WTC11 (cell line): ENCODE measurements at regions of chr1 and their contacts with region 1.

Region 1: DNA sequence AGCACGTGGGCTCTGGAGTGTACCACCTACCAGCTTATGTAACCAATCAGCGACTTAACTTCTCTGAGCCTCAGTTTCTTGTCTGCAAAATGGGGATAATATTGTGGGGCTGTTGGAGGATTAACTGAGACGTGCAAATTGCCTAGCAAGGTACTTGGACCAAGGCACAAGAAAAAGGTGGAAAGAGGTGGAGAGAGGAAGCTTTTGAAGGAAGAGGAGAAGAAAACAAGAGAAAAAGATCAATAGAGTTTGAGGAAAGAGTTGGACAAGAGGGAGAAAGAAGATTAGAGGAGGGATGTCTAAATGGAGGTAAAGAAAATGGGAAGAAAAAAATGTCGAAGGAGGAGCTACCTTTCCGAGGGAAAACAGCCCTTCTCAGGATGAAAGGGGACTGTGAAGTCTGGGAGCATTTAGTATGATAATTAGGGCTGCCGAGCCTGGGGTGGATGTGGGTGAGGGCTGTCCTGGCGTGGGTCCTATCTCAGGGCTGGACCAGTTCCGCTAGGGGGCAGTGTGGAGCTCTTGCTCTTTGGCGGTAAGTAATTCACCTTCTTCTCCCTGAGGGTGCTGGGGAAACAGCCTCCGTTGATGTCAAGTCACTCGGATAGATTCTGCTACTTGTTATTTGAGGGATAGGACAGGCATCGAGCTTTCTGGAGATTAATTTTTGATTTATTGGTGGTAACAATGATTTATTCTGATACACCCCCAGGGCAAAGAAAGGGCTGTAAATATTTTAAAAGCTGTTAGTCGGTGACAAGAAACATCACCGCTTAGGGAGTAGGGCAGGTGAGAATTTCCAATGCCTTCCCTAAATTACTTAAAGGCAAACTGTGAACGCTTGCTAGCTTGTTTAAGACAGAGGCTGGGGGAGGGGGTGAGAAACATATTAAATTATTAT is 79.0 kb upstream of the NFASC start:
- DNase-seq: peak; percentile 95
- ATAC-seq: peak; percentile 96
- H3K4me3 Mint-ChIP-seq: no peak overlapping the region
- H3K27ac Mint-ChIP-seq: no peak overlapping the region
- H3K4me1 Mint-ChIP-seq: peaks cover 12% of the 10 kb centered on the region
- H3K27me3 Mint-ChIP-seq: peaks cover 11% of the 10 kb centered on the region
- CTCF ChIP-seq: peak; percentile 90

Region 2: GRCh38 chr1:204651843-204652421 is 139.8 kb before region 1 on chr1:
- CTCF ChIA-PET with region 1: interaction called, 18 read pairs
- POLR2A ChIA-PET with region 1: no interaction called
- DNase-seq: peak; percentile 50
- ATAC-seq: peak; percentile 72
- H3K4me3 Mint-ChIP-seq: peak overlapping the region; percentile 43
- H3K27ac Mint-ChIP-seq: no peak overlapping the region
- H3K4me1 Mint-ChIP-seq: peaks cover 43% of the 10 kb centered on the region
- H3K27me3 Mint-ChIP-seq: peaks cover 18% of the 10 kb centered on the region
- CTCF ChIP-seq: no peak

Region 3: DNA sequence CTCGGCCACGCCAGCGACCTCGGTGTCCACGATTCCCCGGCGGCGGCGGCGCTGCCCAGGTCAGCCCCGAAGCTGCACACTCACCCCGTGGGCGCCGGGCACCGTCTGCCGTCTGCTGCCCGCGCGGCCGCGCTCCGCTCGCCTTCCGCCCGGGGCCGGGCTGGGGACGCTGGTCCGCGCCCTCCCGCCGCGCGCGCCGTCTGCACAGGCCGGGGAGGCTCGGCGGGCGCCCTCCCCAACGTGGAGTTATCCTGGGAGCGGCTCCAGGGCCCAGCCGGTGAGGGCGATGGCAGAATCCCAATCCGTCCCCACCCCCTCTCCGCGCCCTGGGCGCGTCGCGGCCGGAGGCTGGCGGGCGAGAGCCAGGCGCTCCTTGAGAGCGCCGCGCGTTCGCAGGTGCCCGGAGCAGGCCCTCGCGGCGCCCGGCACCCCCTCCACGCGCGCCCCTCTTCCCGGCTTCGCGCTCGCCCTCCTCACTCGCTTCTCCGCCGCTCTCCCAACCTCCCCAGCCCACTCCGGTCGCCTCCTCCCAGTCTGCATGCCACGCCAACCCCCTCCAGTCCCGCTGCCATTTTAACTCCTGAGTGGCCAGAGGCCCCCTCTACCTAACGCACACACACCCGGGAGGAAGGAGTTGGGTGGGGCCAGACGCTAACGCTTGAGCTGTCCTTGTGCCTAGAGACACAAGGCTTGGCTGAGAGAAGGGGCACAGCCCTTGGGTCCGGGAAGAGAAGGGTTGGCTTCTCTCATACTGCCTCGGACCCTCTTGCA is 106.3 kb before region 1 on chr1 and contains the start of gene LRRN2:
- CTCF ChIA-PET with region 1: interaction called, 18 read pairs
- POLR2A ChIA-PET with region 1: interaction called, 3 read pairs
- DNase-seq: peak; percentile 42
- ATAC-seq: peak; percentile 33
- H3K4me3 Mint-ChIP-seq: peak within 1 kb of the TSS; percentile 85
- H3K27ac Mint-ChIP-seq: no peak within 1 kb of the TSS; the same call in 1 of the 2 replicates
- H3K4me1 Mint-ChIP-seq: peaks cover 26% of the 10 kb centered on the region
- H3K27me3 Mint-ChIP-seq: peaks cover 65% of the 10 kb centered on the region
- CTCF ChIP-seq: no peak
- total RNA-seq, gene LRRN2: 3.2 to 5.3 TPM (median 3.4 TPM) in 3 replicates

Region 4: GRCh38 chr1:204692325-204692840 is 99.3 kb before region 1 on chr1:
- CTCF ChIA-PET with region 1: interaction called, 13 read pairs
- POLR2A ChIA-PET with region 1: no interaction called
- DNase-seq: no peak
- ATAC-seq: peak; percentile 66
- H3K4me3 Mint-ChIP-seq: peak overlapping the region; percentile 28
- H3K27ac Mint-ChIP-seq: no peak overlapping the region
- H3K4me1 Mint-ChIP-seq: peaks cover 28% of the 10 kb centered on the region
- H3K27me3 Mint-ChIP-seq: peaks cover 56% of the 10 kb centered on the region
- CTCF ChIP-seq: no peak

Region 5: DNA sequence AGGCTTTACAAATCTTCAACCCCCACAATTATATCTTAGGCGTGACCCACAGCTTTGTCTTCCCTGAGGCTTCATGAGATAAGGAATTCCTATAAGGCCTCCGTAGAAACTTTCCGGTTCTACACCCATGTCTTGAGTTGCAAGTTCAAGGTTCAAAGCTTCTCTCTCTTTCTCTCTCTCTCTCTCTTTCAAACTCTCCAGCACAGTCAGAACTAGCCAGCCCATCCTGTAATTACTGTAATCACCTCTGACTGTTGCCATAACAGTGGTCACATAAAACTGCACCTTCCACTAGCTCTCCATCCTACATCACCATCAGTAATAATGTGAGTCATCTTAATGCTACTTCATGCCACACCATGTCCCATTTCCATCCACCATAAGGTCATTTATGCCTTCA is 11.1 kb before region 1 on chr1:
- CTCF ChIA-PET with region 1: interaction called, 19 read pairs
- POLR2A ChIA-PET with region 1: no interaction called
- DNase-seq: no peak
- ATAC-seq: no peak
- H3K4me3 Mint-ChIP-seq: no peak overlapping the region
- H3K27ac Mint-ChIP-seq: no peak overlapping the region
- H3K4me1 Mint-ChIP-seq: peaks cover under 1% of the 10 kb centered on the region
- H3K27me3 Mint-ChIP-seq: peaks cover 6% of the 10 kb centered on the region
- CTCF ChIP-seq: no peak